ENCODE measurements at regions of chr9 and their contacts with region 1.

Region 1: GRCh38 chr9:75033791-75034473 is 5.8 kb upstream of the CARNMT1 start:
- DNase-seq: no peak
- ATAC-seq: no peak

Region 2: GRCh38 chr9:75064307-75065025 is 30.5 kb after region 1 on chr9:
- intact Hi-C with region 1: loop called in 1 of 2 experiments (anchors 5 kb)
- DNase-seq: no peak
- ATAC-seq: peak in 1 of 2 donors; percentile 84

Measured in left cardiac atrium (tissue), 4 donors.